ENCODE measurements at regions of chr21 and their contacts with region 1.

Region 1: DNA sequence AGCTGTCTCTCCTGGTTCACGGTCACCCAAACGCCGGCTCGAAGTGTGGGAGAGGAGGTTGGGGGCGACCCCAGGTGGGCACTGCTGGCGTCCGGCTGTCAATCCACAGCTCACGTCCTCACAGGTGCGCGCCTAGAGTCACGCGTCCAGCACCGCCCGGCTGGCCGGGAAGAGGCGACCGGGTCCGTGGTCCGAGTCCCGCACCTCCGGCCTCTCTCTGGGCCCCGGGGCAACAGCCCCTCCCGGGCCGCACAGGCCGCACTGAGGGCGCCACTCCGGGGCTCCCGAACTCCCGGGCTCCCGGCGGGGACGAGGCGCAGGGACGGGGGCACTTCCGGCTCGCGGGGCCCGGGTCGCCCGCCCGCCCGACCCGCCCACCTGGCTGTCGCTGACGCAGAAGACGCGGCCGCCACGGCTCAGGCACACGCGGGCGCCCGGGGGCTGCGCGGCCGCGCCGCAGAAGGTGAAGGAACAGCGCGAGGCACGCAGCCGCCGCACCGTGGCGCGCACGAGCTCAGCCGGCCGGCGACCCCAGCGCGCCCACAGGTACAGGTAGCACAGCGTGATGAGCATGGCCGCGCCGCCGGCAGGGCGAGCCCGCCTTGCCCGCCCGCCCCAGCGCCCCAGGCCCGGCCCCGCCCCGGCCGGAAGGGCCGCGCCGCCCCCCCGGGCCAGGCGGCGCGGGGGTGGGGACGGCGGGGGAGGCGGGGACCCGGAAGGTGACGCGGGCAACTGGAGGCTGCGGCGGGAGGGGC is at the start of gene HLCS:
- DNase-seq: peak; percentile 69
- H3K4me3 Mint-ChIP-seq: peak within 1 kb of the TSS; percentile 93
- H3K27ac Mint-ChIP-seq: peak within 1 kb of the TSS; percentile 90
- H3K4me1 Mint-ChIP-seq: peaks cover 22% of the 10 kb centered on the region
- H3K27me3 Mint-ChIP-seq: no peaks in the 10 kb centered on the region
- total RNA-seq, gene HLCS: 12.6 and 15.8 TPM in 2 replicates

Region 2: GRCh38 chr21:36945496-36946138 is 20.6 kb before region 1 on chr21:
- intact Hi-C with region 1: no loop called
- DNase-seq: no peak
- H3K4me3 Mint-ChIP-seq: no peak overlapping the region
- H3K27ac Mint-ChIP-seq: no peak overlapping the region
- H3K4me1 Mint-ChIP-seq: no peaks in the 10 kb centered on the region
- H3K27me3 Mint-ChIP-seq: no peaks in the 10 kb centered on the region

Region 3: GRCh38 chr21:36976882-36977651 is 10.8 kb after region 1 on chr21:
- intact Hi-C with region 1: loop called (anchors 1 kb)
- DNase-seq: no peak
- H3K4me3 Mint-ChIP-seq: no peak overlapping the region
- H3K27ac Mint-ChIP-seq: peak overlapping the region; percentile 8
- H3K4me1 Mint-ChIP-seq: peaks cover 23% of the 10 kb centered on the region
- H3K27me3 Mint-ChIP-seq: peaks cover 5% of the 10 kb centered on the region

Region 4: DNA sequence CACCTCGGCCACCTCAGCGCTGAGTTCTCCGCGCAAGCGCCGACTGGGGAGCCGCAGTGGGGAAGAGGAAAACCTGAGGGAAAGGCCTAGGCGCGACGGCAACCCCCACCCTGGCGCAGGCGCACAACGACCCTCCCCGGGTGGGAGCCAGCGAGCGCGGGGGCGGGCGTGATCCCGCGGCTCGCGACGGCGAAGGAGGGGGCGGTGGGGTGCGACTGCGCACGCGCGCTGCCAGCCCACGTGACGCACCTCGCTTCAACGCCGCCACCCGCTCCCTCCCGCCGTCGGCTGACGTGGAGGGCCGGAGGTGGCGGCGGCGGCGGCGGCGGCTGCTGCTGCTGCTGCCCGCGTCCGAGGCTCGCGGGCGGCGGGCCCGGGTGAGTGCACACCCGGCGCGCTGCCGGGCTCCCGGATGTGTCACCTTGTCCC is 106.8 kb after region 1 on chr21 and contains the starts of genes PIGP and TTC3:
- intact Hi-C with region 1: loop called (anchors 2 kb)
- DNase-seq: peak; percentile 93
- H3K4me3 Mint-ChIP-seq: peak within 1 kb of the TSS; percentile 95
- H3K27ac Mint-ChIP-seq: peak within 1 kb of the TSS; percentile 95
- H3K4me1 Mint-ChIP-seq: peaks cover 50% of the 10 kb centered on the region
- H3K27me3 Mint-ChIP-seq: peaks cover 2% of the 10 kb centered on the region
- total RNA-seq, gene PIGP: 18.2 and 20.1 TPM in 2 replicates
- total RNA-seq, gene TTC3: 61.8 and 69.3 TPM in 2 replicates

Region 5: DNA sequence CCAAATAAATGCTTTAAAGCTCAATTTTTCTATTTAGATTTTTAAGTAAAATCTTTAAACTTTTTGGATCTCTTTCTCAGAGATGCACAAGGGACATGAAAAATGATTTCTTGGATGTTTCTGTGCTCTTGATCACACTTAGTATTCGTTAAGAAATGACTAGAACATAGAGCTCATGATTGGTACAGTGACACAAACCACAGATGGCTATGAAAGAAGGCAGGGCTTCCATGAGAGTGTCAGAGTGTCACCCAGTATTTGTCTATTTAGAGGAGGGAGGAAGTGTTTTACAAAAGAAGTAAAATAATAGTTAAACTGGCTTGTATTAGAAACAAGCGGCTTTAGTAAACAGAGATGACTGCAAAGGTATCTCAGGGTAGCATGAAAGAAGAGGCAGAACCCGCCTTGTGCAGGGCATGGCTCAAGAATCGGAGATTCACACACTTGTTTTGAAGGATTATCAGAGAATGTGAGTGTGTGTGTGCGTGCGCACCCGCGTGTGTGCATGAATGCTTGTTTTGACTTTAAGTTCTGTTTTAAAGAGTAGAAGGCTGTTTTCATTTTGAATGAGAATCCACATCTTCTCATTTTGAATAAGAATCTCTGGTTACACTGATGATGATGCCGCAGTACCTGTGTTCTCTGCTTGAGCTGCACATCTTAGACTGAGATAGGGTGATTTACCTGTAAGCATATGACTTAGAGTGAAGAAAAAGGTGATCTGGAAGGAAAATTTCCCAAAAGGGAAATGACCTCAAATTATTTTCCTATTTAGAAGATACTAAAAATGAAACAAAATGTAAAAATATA is 218.7 kb after region 1 on chr21:
- intact Hi-C with region 1: no loop called
- DNase-seq: no peak
- H3K4me3 Mint-ChIP-seq: no peak overlapping the region
- H3K27ac Mint-ChIP-seq: no peak overlapping the region
- H3K4me1 Mint-ChIP-seq: peaks cover 13% of the 10 kb centered on the region
- H3K27me3 Mint-ChIP-seq: no peaks in the 10 kb centered on the region

Measured in activated T-helper 1 cell treated with anti-CD3 and anti-CD28 coated beads, Interleukin-12 subunit alpha, Interleukin-12 subunit beta, Interleukin-2, Interleukin-4 antibody, amounts not matched to agents 30 ng/mL and 10 ng/mL and 1 ng/mL, durations not matched to agents 14 hours and 24 hours and 36 hours (primary cell).